Ascending aorta (tissue), 2 donors: ENCODE measurements at regions of chr18 and their contacts with region 1.

Region 1: DNA sequence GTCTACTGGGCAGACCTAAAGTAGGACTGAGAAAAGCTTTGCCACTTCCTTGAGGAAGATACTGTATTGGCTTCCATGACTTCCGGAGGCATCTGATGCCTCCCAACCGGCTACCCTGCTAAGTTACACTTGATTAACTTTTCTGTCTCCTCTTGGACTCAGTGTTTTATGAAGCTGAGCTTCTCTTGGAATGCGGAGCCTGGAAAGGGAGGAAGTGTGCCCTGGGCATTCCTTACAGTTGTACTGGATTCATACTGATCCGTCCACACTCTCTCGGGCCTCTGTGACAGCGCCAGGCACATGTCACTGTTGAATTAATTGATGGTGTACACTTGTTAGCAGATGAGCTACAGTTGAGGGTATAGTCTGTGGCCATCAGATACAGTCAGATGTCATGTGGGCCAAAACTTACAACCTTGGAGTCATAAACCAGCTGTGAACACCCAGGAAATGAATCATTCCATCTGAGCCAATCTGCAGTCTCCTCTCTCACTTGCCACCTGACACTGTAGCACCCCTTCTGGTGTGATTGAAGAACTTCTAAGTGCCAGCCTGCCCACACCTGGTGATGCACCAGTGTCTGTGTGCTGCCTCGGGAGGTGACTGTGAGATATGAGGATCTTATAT is 122.5 kb downstream of the FHOD3 start:
- DNase-seq: no peak
- H3K4me3 ChIP-seq: no peak overlapping the region
- H3K27ac ChIP-seq: peak overlapping the region; percentile 73 to 82
- H3K4me1 ChIP-seq: peaks cover 3 to 44% of the 10 kb centered on the region in 2 donors
- H3K27me3 ChIP-seq: no peaks in the 10 kb centered on the region
- CTCF ChIP-seq: peak in 2 of 3 experiments; percentile 9 to 20

Region 2: GRCh38 chr18:36352384-36352783 is 67.6 kb before region 1 on chr18:
- intact Hi-C with region 1: loop called (anchors 5 kb)
- DNase-seq: peak in 1 of 2 donors; percentile 75
- H3K4me3 ChIP-seq: no peak overlapping the region
- H3K27ac ChIP-seq: peak overlapping the region in 1 of 2 donors; percentile 14
- H3K4me1 ChIP-seq: peaks cover 0 to 15% of the 10 kb centered on the region in 2 donors
- H3K27me3 ChIP-seq: no peaks in the 10 kb centered on the region
- CTCF ChIP-seq: no peak

Region 3: GRCh38 chr18:36441426-36442240 is 21.6 kb after region 1 on chr18:
- intact Hi-C with region 1: loop called (anchors 1 kb)
- DNase-seq: no peak
- H3K4me3 ChIP-seq: peak overlapping the region; percentile 2 to 27
- H3K27ac ChIP-seq: peak overlapping the region; percentile 78 to 85
- H3K4me1 ChIP-seq: peaks cover 23 to 52% of the 10 kb centered on the region in 2 donors
- H3K27me3 ChIP-seq: no peaks in the 10 kb centered on the region
- CTCF ChIP-seq: no peak

Region 4: GRCh38 chr18:36464126-36464651 is 44.2 kb after region 1 on chr18:
- intact Hi-C with region 1: loop called (anchors 10 kb)
- DNase-seq: peak in 1 of 2 donors; percentile 43
- H3K4me3 ChIP-seq: no peak overlapping the region
- H3K27ac ChIP-seq: no peak overlapping the region
- H3K4me1 ChIP-seq: no peaks in the 10 kb centered on the region
- H3K27me3 ChIP-seq: no peaks in the 10 kb centered on the region
- CTCF ChIP-seq: no peak

Region 5: GRCh38 chr18:36572135-36572856 is 152.3 kb after region 1 on chr18:
- intact Hi-C with region 1: loop called (anchors 10 kb)
- DNase-seq: peak in 1 of 2 donors; percentile 76
- H3K4me3 ChIP-seq: no peak overlapping the region
- H3K27ac ChIP-seq: peak overlapping the region; percentile 13 to 54
- H3K4me1 ChIP-seq: no peaks in the 10 kb centered on the region
- H3K27me3 ChIP-seq: no peaks in the 10 kb centered on the region
- CTCF ChIP-seq: peak; percentile 38 to 80 (median 52)